ENCODE measurements at regions of chr6 and their contacts with region 1.

Region 1: DNA sequence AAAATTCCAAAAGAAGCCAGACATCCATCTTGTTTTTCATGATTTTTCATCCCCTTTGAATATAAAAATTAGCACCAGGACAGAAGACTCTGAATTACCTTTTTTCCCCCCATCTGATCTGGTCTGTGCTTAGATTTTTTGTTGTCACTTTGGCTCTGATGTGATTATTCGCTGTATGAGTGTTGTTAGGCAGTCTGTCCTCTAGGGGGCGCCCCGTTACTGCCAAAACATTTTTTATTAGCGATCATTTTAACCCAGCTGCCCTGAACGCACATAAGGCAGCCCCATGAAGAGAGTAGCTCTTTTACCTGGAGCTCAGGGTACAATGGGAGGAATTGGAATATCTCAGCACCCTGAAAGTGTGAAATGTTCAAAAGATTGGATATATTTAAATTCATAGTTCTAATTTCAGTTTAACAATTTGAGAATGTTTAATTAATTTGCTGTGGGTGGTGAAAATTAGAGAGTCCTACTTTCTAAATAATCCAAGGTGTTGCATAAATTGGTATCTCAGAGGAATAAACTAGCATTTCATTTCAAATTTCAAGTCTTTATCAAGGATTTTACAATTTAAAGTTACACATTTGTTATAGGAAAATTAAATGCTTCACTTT is 60.8 kb downstream of the PRPH2 start:
- DNase-seq: peak; percentile 82
- ATAC-seq: peak; percentile 90

Region 2: DNA sequence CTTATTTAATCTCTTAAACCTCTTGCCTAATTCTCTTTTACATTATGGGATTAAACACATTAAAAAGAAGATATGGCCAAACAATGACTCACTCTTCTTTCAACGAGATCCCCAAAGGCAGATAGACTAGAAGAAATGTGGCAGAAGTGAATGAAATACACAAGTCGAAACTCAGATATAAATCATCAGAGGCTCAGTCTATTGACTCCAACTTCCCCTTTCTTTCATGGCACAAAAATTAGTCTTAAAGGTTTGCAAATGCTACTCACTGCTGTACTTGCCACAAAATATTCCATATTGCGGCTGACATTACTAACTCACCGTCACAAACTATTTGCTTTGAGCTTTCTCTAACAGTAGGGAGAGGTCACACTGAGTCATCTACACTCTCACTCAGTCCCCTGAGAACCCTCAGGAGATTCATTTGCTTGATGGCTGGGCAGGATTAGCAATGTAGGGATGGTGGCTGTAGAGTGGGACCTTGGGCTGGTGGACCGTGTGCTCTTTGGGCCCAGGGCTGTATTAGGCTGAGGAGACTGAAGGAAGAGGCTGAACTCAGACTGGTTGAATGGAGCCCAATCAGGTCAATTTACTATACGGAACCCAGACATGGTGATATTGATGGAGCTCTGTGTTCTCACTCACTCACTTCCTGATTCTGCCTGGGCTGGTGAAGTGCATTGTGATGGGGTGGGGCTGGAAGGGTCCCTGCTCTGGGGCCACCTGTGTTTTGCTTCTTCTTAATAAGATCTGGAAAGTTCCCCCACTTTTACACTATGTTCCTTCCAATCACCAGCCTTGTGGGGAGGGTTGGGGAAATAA is 140.7 kb before region 1 on chr6:
- intact Hi-C with region 1: no loop called
- DNase-seq: no peak
- ATAC-seq: no peak

Region 3: DNA sequence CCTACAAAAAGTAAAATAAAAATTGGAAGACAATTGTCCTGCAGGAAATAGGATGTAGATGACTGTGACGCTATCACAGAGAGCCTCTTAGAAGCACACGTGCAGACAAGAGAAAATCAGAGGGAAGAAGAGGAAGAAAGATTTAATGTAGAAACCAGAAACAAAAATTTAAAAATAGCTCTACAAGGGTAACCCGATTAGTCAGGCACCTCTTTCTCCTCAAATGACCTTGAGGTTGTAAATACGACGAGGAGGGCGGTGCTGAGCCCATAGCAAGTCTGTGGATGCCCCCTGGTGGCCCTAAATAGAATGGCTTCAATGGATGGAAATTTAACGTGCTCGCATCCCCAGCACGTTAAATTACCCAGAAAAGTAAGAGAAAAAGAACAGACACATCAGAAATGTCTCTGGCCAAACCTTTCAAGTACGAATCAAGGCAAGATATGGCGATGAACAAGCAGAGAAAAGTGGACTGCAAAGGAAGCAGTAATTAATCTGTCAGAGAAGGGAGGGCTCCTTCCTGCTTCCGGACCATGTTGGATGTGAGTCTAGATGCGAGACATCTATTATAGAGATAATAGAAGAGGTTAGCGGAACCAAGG is 64.9 kb after region 1 on chr6:
- intact Hi-C with region 1: loop called (anchors 2 kb)
- DNase-seq: peak; percentile 75
- ATAC-seq: peak; percentile 97

Region 4: GRCh38 chr6:42864602-42865001 is 203.0 kb after region 1 on chr6:
- intact Hi-C with region 1: loop called (anchors 5 kb)
- DNase-seq: no peak
- ATAC-seq: no peak

Region 5: GRCh38 chr6:42879372-42880239 is 218.0 kb after region 1 on chr6 and contains the start of gene RPL7L1:
- intact Hi-C with region 1: loop called (anchors 5 kb)
- DNase-seq: peak; percentile 90
- ATAC-seq: peak; percentile 98
- total RNA-seq, gene RPL7L1: 39.5 TPM

Measured in Right ventricle myocardium superior (tissue), 1 donor.